Mammary epithelial cell (primary cell): ENCODE measurements at regions of chr1 and their contacts with region 1.

Region 1: DNA sequence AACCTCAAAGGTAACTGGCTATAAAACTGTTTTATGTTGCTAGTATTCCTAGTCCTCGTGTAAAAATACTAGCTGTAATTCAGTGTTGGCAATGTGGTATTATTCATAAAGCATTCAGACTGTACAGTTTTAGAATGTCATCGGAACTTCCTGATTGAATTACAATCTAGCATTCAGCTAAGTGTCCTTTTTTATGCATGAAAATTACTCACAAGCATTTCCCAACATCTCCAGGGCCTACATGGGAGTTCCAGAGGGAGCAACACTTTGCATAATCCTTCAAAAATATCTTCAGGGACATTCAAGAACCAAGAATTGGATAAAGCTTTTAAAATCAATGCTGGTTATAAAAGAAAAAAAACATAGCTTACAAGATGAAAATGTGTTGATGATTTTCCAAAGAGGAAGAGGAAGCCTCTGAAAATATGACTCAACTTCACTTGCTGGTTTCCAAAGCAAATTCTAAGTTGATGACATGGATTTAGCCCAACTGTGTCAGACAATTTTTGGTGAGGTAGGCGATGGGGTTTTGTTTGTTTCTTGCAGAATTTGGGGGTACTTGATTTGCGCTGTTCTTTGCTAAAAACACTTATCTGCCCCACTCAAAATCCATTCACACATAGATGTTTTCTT is 137.8 kb downstream of the SLC44A5 start:
- DNase-seq: no peak
- H3K4me3 ChIP-seq: no peak overlapping the region
- H3K27ac ChIP-seq: no peak overlapping the region
- H3K4me1 ChIP-seq: no peaks in the 10 kb centered on the region
- H3K27me3 ChIP-seq: no peaks in the 10 kb centered on the region
- CTCF ChIP-seq: no peak

Region 2: DNA sequence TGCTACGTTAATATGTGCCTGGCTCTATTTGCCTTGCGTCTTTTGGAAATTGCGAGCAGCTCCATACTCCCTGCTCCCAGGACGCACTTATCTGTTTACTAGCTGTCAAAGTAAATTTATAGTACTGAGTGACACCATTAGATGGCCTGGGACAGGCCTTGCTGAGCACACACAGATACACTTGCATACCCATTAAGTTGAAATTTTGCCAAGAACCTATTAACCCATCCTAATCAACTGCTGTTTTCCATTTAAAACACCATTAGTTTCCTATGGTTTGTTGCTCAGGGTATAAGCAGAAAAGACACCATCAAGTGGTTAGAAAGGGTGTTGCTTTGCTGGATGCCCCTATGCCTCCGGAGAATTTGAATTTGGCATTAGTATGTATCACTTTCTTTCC is 49.5 kb before region 1 on chr1:
- CTCF ChIA-PET with region 1: no interaction called
- dilution Hi-C with region 1: no loop called
- in situ Hi-C with region 1: no loop called
- intact Hi-C with region 1: no loop called
- DNase-seq: no peak
- H3K4me3 ChIP-seq: no peak overlapping the region
- H3K27ac ChIP-seq: no peak overlapping the region
- H3K4me1 ChIP-seq: no peaks in the 10 kb centered on the region
- H3K27me3 ChIP-seq: no peaks in the 10 kb centered on the region
- CTCF ChIP-seq: no peak

Region 3: GRCh38 chr1:75615613-75616435 is 142.7 kb after region 1 on chr1:
- CTCF ChIA-PET with region 1: interaction called, 20 read pairs
- dilution Hi-C with region 1: no loop called
- in situ Hi-C with region 1: no loop called
- intact Hi-C with region 1: no loop called
- DNase-seq: peak; percentile 9
- H3K4me3 ChIP-seq: peak overlapping the region; percentile 4 to 39 (median 25)
- H3K27ac ChIP-seq: no peak overlapping the region
- H3K4me1 ChIP-seq: peaks cover 12% of the 10 kb centered on the region
- H3K27me3 ChIP-seq: peaks cover 32% of the 10 kb centered on the region
- CTCF ChIP-seq: no peak